ENCODE measurements at regions of chr2 and their contacts with region 1.

Region 1: GRCh38 chr2:176140513-176141317 is 10.6 kb upstream of the HOXD4 start:
- DNase-seq: peak; percentile 83
- H3K27ac ChIP-seq: peak overlapping the region; percentile 53
- CTCF ChIP-seq: peak; percentile 95

Region 2: DNA sequence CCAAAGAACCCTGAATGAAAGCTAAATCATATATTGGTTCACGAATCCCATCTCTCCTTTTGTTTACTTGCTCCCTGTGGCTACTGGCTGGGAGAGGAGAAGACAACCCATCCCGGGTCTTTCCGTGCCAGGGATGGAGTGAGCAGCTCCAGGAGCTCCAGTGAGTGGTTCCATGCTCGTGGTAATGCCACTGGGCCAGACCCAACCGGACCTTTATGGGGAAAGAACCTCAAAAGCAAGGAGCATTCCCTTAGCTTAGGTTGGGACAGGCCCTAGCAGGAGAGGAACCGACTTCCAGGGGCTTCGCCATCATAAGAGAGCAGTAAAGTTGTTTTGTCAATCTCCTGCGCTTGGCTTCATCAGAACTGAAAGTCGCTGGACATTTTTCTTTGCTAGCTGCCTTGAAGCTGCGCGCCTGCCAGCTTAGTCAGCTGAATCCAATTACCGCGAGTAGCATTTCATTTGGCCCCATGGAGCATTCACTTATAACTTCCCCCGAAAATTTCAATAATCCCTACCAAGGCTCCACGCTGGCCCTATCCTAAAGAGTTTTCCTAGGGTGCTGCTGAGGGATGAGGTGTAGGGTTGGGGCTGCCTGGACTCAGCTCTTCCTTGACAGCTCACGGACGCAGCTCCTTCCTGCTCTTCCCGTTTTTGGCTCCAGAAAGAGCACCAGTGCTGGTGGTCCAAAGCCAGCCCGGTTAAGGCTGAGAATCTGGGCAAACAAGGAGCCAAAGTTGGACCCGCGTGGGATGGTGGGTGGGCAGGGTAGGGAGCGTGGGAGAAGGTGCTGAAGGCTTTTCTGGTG is 21.3 kb after region 1 on chr2:
- CTCF ChIA-PET with region 1: interaction called, 10 read pairs
- POLR2A ChIA-PET with region 1: no interaction called
- DNase-seq: no peak
- H3K27ac ChIP-seq: no peak overlapping the region
- CTCF ChIP-seq: no peak

Region 3: GRCh38 chr2:176174824-176175708 is 34.4 kb after region 1 on chr2:
- CTCF ChIA-PET with region 1: interaction called, 13 read pairs
- POLR2A ChIA-PET with region 1: no interaction called
- DNase-seq: no peak
- H3K27ac ChIP-seq: no peak overlapping the region
- CTCF ChIP-seq: no peak

Region 4: DNA sequence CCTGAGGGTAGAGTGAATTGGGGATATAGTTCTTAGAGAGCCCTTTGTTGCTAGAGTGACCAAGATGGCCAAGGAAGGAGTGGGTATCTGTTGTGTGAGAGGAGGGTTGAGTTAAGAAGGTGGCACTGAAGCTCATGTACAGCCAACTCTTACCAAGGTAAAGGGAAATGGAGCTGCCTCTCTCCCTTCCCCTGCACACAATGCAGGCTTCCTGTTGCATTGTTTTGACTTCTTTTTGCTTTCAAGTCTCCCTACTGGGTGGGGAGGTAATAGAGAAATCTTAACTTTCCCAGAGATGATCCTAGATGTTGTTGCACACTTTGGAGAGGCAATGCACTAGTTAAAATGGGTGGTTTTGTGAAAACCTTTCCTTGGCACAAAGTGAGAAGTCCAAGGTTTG is 71.6 kb after region 1 on chr2:
- CTCF ChIA-PET with region 1: no interaction called
- POLR2A ChIA-PET with region 1: no interaction called
- DNase-seq: no peak
- H3K27ac ChIP-seq: no peak overlapping the region
- CTCF ChIP-seq: no peak

Region 5: DNA sequence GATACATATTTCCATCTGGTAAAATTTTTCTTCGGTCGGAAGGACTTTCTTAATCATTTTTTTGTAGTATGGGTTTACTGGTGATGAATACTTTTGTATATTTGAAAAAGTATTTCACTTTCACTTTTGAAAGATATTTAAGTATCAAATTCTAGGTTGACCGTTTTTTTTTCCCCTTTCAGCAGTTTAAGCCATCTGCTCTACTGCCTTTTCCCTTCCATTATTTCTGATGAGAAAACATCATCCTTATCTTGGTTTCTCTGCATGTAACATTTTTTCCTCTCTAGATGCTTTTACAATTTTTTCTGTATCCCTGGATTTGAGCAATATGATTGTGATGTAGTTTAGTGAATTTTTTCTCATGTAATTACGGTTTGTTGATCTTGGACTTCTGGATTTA is 215.5 kb after region 1 on chr2:
- CTCF ChIA-PET with region 1: no interaction called
- POLR2A ChIA-PET with region 1: no interaction called
- DNase-seq: no peak
- H3K27ac ChIP-seq: no peak overlapping the region
- CTCF ChIP-seq: no peak

Region 6: DNA sequence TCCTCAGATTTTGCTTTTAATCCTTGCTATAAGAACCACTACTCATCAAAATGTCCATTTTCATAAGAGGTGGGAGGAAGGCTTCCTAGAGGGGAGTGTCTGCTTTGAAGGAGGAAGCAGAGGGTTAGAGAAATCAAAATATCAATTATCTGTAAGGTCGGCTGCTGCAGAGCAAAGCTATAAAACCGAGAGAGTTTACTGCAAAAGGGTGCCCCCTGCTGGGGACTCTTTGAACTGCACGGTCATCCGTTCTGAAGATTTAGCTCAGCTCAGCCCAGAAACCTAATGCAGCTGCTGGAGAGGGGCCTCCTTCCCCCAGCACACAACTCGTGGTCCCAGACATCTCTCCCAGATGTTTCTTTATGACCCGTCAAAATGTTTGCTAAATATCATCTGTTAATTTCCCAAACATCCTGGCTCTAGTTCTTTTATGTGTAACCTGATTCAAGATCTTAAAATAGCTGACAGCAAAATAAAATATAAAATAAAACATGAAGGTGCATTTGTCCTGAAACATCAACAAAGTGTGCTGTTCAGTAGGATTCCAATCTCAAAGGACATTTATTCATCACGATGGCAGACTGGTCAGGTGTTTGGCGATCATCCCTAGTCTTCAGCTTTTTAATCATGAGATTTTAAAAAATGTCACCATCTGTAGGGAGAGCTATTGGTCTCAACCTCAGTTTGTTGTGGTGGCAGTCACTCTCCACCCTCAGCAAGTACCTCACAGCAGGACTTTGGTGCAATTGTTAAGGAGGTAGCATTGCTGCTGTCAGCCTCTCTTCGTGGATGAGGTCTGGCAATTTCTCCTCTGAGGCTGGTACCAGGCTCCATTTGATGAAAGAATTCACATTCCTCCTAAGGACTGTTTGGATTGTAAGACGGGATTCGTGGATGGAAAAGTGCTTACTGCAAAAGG is 314.4 kb after region 1 on chr2:
- CTCF ChIA-PET with region 1: interaction called, 38 read pairs
- POLR2A ChIA-PET with region 1: no interaction called
- DNase-seq: peak; percentile 46
- H3K27ac ChIP-seq: no peak overlapping the region
- CTCF ChIP-seq: peak; percentile 86

Region 7: DNA sequence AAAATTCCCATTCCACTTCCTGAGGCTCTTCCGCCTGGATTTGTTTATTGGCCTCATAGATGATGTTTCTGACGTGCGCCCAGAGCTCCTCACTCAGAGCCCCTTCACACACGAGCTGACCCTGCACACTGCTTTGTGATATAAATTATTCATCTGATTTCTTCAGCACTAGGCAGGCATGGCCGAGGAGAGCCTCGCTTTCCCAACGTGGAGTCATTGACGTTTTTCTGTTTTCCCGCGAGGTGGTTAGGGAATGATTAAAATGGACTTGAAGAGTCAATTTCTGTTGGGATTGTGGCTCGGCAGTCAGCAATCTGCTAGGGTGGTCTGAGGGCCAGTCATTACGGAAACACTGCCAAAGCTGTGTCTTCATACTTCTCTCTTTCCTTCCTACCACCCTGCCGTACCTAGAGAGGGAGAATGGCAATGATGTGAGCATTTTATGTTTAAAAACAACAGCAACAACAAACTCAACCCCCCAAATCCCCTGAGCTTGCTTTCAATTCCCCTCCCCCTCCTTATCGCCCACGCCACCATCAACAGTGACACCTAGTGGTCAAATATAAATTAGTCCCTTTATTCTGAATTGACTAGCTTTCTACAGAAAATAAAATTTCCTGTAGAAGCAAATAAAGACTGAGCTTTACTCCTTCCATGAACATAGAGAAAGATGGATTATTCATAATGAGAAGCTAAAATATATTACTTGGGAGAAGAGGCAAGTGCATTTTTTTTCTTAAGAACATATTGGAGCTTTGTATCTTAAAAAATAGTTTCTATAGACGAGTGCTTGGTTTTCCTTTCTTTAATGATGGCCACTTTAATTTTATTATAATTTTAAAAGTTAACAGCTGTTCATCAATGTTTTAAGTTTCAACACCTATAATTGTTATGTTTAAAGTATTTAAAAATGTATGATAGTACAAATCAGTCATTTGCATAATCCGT is 413.7 kb after region 1 on chr2:
- CTCF ChIA-PET with region 1: interaction called, 20 read pairs
- POLR2A ChIA-PET with region 1: no interaction called
- DNase-seq: peak; percentile 71
- H3K27ac ChIP-seq: peak overlapping the region; percentile 75
- CTCF ChIP-seq: peak; percentile 71

Region 8: GRCh38 chr2:176638167-176639015 is 497.7 kb after region 1 on chr2:
- CTCF ChIA-PET with region 1: interaction called, 34 read pairs
- POLR2A ChIA-PET with region 1: no interaction called
- DNase-seq: peak; percentile 82
- H3K27ac ChIP-seq: peak overlapping the region; percentile 70
- CTCF ChIP-seq: peak; percentile 84

Region 9: DNA sequence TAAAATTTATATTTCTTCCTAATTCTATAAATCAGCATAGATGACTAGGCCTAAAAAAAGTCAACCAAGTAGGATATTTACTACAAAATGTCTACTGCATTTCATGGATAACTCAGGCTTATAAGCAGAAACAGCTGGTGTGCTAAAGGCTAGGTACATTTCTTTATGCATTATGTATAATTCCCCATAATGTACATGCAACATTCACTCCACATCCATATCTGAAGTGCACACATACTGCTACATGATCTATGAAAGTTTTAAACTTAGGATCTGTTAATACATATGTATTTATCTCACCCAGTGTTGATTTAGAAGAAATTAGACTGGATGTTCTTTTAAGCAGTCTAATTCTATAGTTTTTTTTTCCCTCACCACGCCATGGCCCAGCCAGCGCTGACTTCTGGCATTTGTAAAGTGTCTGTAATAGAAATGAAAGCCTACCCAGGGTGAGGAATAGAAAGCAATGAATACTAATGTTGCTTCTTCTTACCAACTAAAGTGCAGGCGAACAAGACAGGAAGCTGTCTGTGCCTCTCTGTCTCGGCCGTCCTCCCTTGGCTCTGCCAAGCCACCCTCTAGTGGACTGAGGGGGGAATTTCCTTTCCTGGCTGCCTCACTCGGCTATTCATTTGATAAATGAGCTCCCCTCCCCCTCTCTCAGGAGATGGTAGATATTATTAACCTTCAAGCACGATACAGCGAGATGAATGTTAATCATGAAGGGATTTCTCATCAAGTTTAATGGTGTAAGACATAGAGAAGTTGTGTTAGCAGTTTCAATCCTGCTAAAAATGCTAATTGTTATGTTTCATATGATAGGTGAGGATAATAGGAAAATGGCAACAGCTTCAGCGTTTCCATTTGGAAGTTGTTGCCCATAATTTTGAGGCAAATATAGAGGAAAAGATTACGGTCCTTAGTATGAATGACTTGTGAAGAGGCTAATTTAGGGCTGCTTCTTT is 513.0 kb after region 1 on chr2:
- CTCF ChIA-PET with region 1: interaction called, 14 read pairs
- POLR2A ChIA-PET with region 1: no interaction called
- DNase-seq: peak; percentile 65
- H3K27ac ChIP-seq: no peak overlapping the region
- CTCF ChIP-seq: peak; percentile 86